Endothelial cell of umbilical vein (primary cell): ENCODE measurements at regions of chr13 and their contacts with region 1.

Region 1: GRCh38 chr13:61913183-61913582 is 497.5 kb upstream of the PCDH20 start:
- DNase-seq: no peak
- H3K4me3 ChIP-seq: no peak overlapping the region
- H3K27ac ChIP-seq: no peak overlapping the region
- H3K4me1 ChIP-seq: no peaks in the 10 kb centered on the region
- H3K27me3 ChIP-seq: no peaks in the 10 kb centered on the region
- CTCF ChIP-seq: no peak
- POLR2A ChIP-seq: no peak

Region 2: GRCh38 chr13:62747629-62748028 is 834.4 kb after region 1 on chr13:
- CTCF ChIA-PET with region 1: no interaction called
- POLR2A ChIA-PET with region 1: no interaction called
- dilution Hi-C with region 1: no loop called
- intact Hi-C with region 1: loop called (anchors 5 kb)
- DNase-seq: no peak
- H3K4me3 ChIP-seq: no peak overlapping the region
- H3K27ac ChIP-seq: no peak overlapping the region
- H3K4me1 ChIP-seq: no peaks in the 10 kb centered on the region
- H3K27me3 ChIP-seq: no peaks in the 10 kb centered on the region
- CTCF ChIP-seq: no peak
- POLR2A ChIP-seq: no peak